B cell (primary cell): ENCODE measurements at regions of chr17 and their contacts with region 1.

Region 1: DNA sequence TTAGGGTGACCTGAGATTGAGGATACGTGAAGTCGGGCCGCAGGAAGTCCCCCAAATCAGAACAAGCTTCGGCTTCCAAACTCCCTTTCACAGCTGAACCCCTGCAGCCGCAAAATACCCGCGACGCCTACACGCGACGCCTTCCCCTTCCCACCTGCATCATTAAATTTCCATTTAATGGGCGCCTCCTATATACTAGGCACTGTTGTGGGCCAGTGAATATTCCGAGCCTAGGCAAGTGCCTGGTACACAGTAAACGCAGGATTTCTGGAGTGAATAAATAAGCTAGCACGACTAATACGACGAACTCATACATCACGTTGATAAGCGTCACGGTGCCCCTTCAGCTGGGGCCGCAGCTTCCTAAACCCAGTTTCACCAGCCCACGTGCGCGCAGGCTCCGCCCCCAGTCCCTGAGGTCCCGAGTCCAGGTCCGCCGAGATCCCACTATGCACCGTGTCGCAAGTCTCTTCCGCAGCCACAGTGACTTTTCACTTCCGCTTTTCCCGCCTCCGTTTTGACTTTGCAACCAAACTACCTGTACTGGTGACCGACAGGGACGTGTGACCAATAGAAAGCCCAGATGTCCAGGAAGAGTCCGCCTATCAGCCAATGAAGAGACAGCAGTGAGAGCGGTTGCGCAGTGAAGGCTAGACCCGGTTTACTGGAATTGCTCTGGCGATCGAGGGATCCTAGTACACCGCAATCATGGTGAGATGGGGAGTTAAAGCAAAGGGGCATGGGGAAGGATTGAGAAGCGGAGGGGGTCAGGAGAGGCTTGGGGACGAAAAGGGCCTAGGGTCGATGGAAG is at the start of gene PSMB3:
- DNase-seq: peak; percentile 100
- ATAC-seq: peak; percentile 85
- H3K4me3 ChIP-seq: peak within 1 kb of the TSS; percentile 61 to 100 (median 97)
- H3K4me3 Mint-ChIP-seq: peak within 1 kb of the TSS; percentile 94
- H3K27ac ChIP-seq: peak within 1 kb of the TSS; percentile 88 to 95
- H3K27ac Mint-ChIP-seq: peak within 1 kb of the TSS; percentile 93
- H3K4me1 ChIP-seq: peaks cover 49 to 59% of the 10 kb centered on the region in 2 donors
- H3K4me1 Mint-ChIP-seq: peaks cover 45% of the 10 kb centered on the region
- H3K27me3 ChIP-seq: peaks cover 0 to 37% (median 25%) of the 10 kb centered on the region in 4 experiments
- H3K27me3 Mint-ChIP-seq: peaks cover 21% of the 10 kb centered on the region
- CTCF ChIP-seq: no peak
- total RNA-seq, gene PSMB3: 106 and 109 TPM in 2 replicates

Region 2: GRCh38 chr17:38605888-38606645 is 146.3 kb before region 1 on chr17 and contains the start of gene SRCIN1:
- CTCF ChIA-PET with region 1: no interaction called
- POLR2A ChIA-PET with region 1: no interaction called
- intact Hi-C with region 1: no loop called
- DNase-seq: peak; percentile 66
- ATAC-seq: peak; percentile 47
- H3K4me3 ChIP-seq: peak within 1 kb of the TSS in 4 of 5 experiments; percentile 33 to 71 (median 55)
- H3K4me3 Mint-ChIP-seq: peak within 1 kb of the TSS; percentile 81
- H3K27ac ChIP-seq: no peak within 1 kb of the TSS
- H3K27ac Mint-ChIP-seq: no peak within 1 kb of the TSS
- H3K4me1 ChIP-seq: peaks cover 10 to 34% of the 10 kb centered on the region in 2 donors
- H3K4me1 Mint-ChIP-seq: peaks cover 18% of the 10 kb centered on the region
- H3K27me3 ChIP-seq: peaks cover 0 to 84% (median 43%) of the 10 kb centered on the region in 4 experiments
- H3K27me3 Mint-ChIP-seq: peaks cover 55% of the 10 kb centered on the region
- CTCF ChIP-seq: peak; percentile 89
- total RNA-seq, gene SRCIN1: 0.44 and 0.66 TPM in 2 replicates

Region 3: GRCh38 chr17:38674749-38675615 is 77.3 kb before region 1 on chr17 and contains the start of gene EPOP:
- CTCF ChIA-PET with region 1: interaction called, 9 read pairs
- POLR2A ChIA-PET with region 1: interaction called, 3 read pairs
- intact Hi-C with region 1: loop called (anchors 1 kb)
- DNase-seq: peak; percentile 85
- ATAC-seq: peak; percentile 85
- H3K4me3 ChIP-seq: peak within 1 kb of the TSS; percentile 16 to 68 (median 56)
- H3K4me3 Mint-ChIP-seq: peak within 1 kb of the TSS; percentile 87
- H3K27ac ChIP-seq: no peak within 1 kb of the TSS
- H3K27ac Mint-ChIP-seq: peak within 1 kb of the TSS; percentile 63
- H3K4me1 ChIP-seq: peaks cover 27 to 40% of the 10 kb centered on the region in 2 donors
- H3K4me1 Mint-ChIP-seq: peaks cover 29% of the 10 kb centered on the region
- H3K27me3 ChIP-seq: peaks cover 0 to 52% (median 26%) of the 10 kb centered on the region in 4 experiments
- H3K27me3 Mint-ChIP-seq: peaks cover 38% of the 10 kb centered on the region
- CTCF ChIP-seq: no peak
- total RNA-seq, gene EPOP: 0.97 and 1.2 TPM in 2 replicates

Region 4: GRCh38 chr17:38717139-38717745 is 35.1 kb before region 1 on chr17:
- CTCF ChIA-PET with region 1: no interaction called
- POLR2A ChIA-PET with region 1: no interaction called
- intact Hi-C with region 1: no loop called
- DNase-seq: no peak
- ATAC-seq: no peak
- H3K4me3 ChIP-seq: no peak overlapping the region
- H3K4me3 Mint-ChIP-seq: no peak overlapping the region
- H3K27ac ChIP-seq: no peak overlapping the region
- H3K27ac Mint-ChIP-seq: no peak overlapping the region
- H3K4me1 ChIP-seq: peaks cover 0 to 4% of the 10 kb centered on the region in 2 donors
- H3K4me1 Mint-ChIP-seq: peaks cover 12% of the 10 kb centered on the region
- H3K27me3 ChIP-seq: no peaks in the 10 kb centered on the region
- H3K27me3 Mint-ChIP-seq: no peaks in the 10 kb centered on the region
- CTCF ChIP-seq: no peak

Region 5: DNA sequence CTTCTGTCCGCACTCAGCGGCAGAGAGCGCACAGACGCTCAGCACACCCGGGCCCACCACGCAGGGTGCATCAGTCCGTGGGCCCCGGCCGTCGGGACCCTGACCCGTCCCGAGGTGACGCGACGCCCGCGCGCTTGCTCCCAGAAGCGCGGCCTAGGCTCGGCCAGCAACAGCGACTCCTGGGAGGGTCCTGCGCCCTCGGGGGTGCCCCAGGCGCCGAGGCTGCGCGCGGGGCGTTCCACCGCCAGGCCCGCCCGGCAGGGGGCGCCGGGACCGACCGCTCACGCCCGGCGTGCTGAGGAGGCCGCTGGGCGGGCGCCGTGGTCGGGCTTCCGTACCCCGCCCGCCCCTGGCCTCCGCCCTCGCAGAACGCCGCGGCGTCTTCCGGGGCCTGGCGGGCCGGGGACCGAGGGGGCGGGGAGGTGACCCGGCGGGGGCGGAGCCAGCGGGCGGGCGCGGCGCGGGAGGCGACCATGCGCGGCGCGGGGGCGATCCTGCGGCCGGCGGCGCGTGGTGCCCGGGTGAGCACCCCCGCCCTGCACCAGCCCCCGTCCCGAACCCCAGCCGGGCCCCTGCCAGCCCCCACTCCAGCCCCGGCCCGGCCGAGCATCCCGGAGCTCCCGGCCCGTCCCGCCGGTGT is 22.3 kb before region 1 on chr17 and contains the start of gene CISD3:
- CTCF ChIA-PET with region 1: interaction called, 10 read pairs
- POLR2A ChIA-PET with region 1: interaction called, 3 read pairs
- intact Hi-C with region 1: loop called (anchors 1 kb)
- DNase-seq: peak; percentile 92
- ATAC-seq: peak; percentile 91
- H3K4me3 ChIP-seq: peak within 1 kb of the TSS; percentile 13 to 85 (median 62)
- H3K4me3 Mint-ChIP-seq: peak within 1 kb of the TSS; percentile 87
- H3K27ac ChIP-seq: peak within 1 kb of the TSS; percentile 79
- H3K27ac Mint-ChIP-seq: peak within 1 kb of the TSS; percentile 89
- H3K4me1 ChIP-seq: peaks cover 32 to 60% of the 10 kb centered on the region in 2 donors
- H3K4me1 Mint-ChIP-seq: peaks cover 59% of the 10 kb centered on the region
- H3K27me3 ChIP-seq: no peaks in the 10 kb centered on the region
- H3K27me3 Mint-ChIP-seq: no peaks in the 10 kb centered on the region
- CTCF ChIP-seq: peak; percentile 71
- total RNA-seq, gene CISD3: 11.3 TPM in 2 replicates

Region 6: GRCh38 chr17:38768417-38768816 is 16.1 kb after region 1 on chr17:
- CTCF ChIA-PET with region 1: no interaction called
- POLR2A ChIA-PET with region 1: no interaction called
- intact Hi-C with region 1: no loop called
- DNase-seq: no peak
- ATAC-seq: no peak
- H3K4me3 ChIP-seq: no peak overlapping the region
- H3K4me3 Mint-ChIP-seq: no peak overlapping the region
- H3K27ac ChIP-seq: no peak overlapping the region
- H3K27ac Mint-ChIP-seq: no peak overlapping the region
- H3K4me1 ChIP-seq: no peaks in the 10 kb centered on the region
- H3K4me1 Mint-ChIP-seq: no peaks in the 10 kb centered on the region
- H3K27me3 ChIP-seq: no peaks in the 10 kb centered on the region
- H3K27me3 Mint-ChIP-seq: no peaks in the 10 kb centered on the region
- CTCF ChIP-seq: no peak

Region 7: DNA sequence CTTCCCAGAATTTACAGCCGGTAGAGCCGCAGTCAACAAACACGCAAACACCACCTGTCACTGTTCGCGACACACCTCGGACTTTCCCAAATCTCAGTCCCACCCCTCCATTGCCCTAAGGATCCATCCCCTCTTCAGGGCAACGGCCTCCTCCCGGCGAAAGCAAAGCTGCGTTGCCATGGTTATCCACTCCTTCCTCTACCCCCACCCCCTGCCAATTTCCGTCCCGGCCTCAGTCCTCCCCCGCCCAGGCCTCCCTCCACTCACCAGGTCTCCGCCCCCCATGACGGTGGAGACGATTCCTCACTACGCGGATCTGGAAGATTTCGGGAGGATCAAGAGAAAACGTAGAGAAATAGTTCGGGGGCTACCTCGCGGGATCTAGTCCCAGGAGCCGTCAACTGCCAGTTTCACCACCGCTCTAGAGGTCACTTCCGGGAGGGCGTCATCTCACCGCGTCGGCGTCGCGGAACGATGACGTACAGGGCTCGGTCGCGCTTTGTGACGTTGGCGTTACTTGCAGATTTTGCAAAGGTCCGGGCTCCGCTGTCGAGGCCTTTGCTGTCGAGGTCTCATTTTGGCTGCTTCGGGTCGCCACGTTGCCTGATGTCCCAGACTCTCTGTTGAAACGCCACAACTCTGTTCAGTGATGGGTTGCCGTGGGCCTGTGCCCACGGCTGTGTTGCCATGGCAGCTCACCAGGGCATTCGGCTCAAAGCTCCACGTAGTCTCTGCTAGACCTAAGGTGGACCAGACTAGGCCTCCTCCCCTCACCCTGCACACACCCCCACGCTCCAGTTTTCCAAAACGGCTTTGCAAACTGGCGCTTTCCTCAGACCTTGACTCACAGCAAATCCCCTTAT is 72.8 kb after region 1 on chr17 and contains the start of gene CWC25:
- CTCF ChIA-PET with region 1: no interaction called
- POLR2A ChIA-PET with region 1: interaction called, 3 read pairs
- intact Hi-C with region 1: loop called (anchors 1 kb)
- DNase-seq: peak; percentile 100
- ATAC-seq: peak; percentile 83
- H3K4me3 ChIP-seq: peak within 1 kb of the TSS; percentile 77 to 93 (median 81)
- H3K4me3 Mint-ChIP-seq: peak within 1 kb of the TSS; percentile 98
- H3K27ac ChIP-seq: peak within 1 kb of the TSS; percentile 88 to 97
- H3K27ac Mint-ChIP-seq: peak within 1 kb of the TSS; percentile 100
- H3K4me1 ChIP-seq: peaks cover 14 to 19% of the 10 kb centered on the region in 2 donors
- H3K4me1 Mint-ChIP-seq: peaks cover 26% of the 10 kb centered on the region
- H3K27me3 ChIP-seq: no peaks in the 10 kb centered on the region
- H3K27me3 Mint-ChIP-seq: no peaks in the 10 kb centered on the region
- CTCF ChIP-seq: no peak
- total RNA-seq, gene CWC25: 39.3 and 43.3 TPM in 2 replicates

Region 8: GRCh38 chr17:38861399-38861843 is 109.1 kb after region 1 on chr17:
- CTCF ChIA-PET with region 1: no interaction called
- POLR2A ChIA-PET with region 1: no interaction called
- intact Hi-C with region 1: no loop called
- DNase-seq: no peak
- ATAC-seq: no peak
- H3K4me3 ChIP-seq: no peak overlapping the region
- H3K4me3 Mint-ChIP-seq: no peak overlapping the region
- H3K27ac ChIP-seq: no peak overlapping the region
- H3K27ac Mint-ChIP-seq: peak overlapping the region; percentile 67
- H3K4me1 ChIP-seq: peaks cover 23 to 29% of the 10 kb centered on the region in 2 donors
- H3K4me1 Mint-ChIP-seq: peaks cover 29% of the 10 kb centered on the region
- H3K27me3 ChIP-seq: no peaks in the 10 kb centered on the region
- H3K27me3 Mint-ChIP-seq: no peaks in the 10 kb centered on the region
- CTCF ChIP-seq: no peak

Region 9: GRCh38 chr17:38898812-38899348 is 146.6 kb after region 1 on chr17:
- CTCF ChIA-PET with region 1: no interaction called
- POLR2A ChIA-PET with region 1: no interaction called
- intact Hi-C with region 1: loop called (anchors 1 kb)
- DNase-seq: peak; percentile 85
- ATAC-seq: peak; percentile 92
- H3K4me3 ChIP-seq: peak overlapping the region; percentile 23 to 55 (median 36)
- H3K4me3 Mint-ChIP-seq: peak overlapping the region; percentile 91
- H3K27ac ChIP-seq: peak overlapping the region; percentile 90 to 96
- H3K27ac Mint-ChIP-seq: peak overlapping the region; percentile 99
- H3K4me1 ChIP-seq: peaks cover 29 to 45% of the 10 kb centered on the region in 2 donors
- H3K4me1 Mint-ChIP-seq: peaks cover 30% of the 10 kb centered on the region
- H3K27me3 ChIP-seq: no peaks in the 10 kb centered on the region
- H3K27me3 Mint-ChIP-seq: no peaks in the 10 kb centered on the region
- CTCF ChIP-seq: no peak